CD8-positive, alpha-beta memory T cell (primary cell): ENCODE measurements at regions of chr12 and their contacts with region 1.

Region 1: DNA sequence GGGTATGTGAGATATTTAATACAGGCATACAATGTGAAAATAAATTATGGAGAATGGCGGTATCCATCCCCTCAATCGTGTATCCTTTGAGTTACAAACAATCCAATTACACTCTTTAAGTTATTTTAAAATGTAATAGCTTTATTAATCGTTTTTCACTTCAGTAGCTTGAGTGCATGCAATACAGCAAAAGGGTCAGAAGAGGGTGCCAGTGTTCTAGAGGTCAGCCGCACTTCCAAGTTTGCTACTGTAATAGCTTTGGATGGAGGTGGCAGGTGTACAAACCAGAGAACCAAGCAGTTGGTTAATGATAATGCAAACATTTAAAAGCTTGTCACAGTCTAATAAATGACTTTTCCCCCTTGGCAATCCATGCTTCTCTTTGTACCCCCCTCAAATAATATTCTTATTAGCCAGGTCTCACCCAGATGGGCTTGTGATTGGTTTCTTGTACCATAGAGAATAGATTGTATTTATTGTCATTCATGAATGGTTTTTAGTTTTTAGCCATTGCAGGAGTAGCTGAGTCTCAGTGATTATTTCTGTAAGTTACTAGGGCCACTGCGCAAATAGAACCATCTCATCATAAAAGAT is 127.0 kb downstream of the ERC1 start:
- DNase-seq: peak; percentile 52 to 80 (median 57)
- H3K4me3 ChIP-seq: no peak overlapping the region
- H3K4me3 Mint-ChIP-seq: no peak overlapping the region
- H3K27ac ChIP-seq: no peak overlapping the region
- H3K27ac Mint-ChIP-seq: no peak overlapping the region
- H3K4me1 ChIP-seq: peaks cover 2% of the 10 kb centered on the region
- H3K4me1 Mint-ChIP-seq: peaks cover 7 to 13% (median 7%) of the 10 kb centered on the region in 3 donors
- H3K27me3 ChIP-seq: no peaks in the 10 kb centered on the region
- H3K27me3 Mint-ChIP-seq: no peaks in the 10 kb centered on the region

Region 2: GRCh38 chr12:1130164-1130563 is 12.1 kb after region 1 on chr12:
- CTCF ChIA-PET with region 1: interaction called, 30 read pairs
- POLR2A ChIA-PET with region 1: no interaction called
- DNase-seq: no peak
- H3K4me3 ChIP-seq: no peak overlapping the region
- H3K4me3 Mint-ChIP-seq: no peak overlapping the region
- H3K27ac ChIP-seq: no peak overlapping the region
- H3K27ac Mint-ChIP-seq: peak overlapping the region in 2 of 8 donors; percentile 38 to 49
- H3K4me1 ChIP-seq: peaks cover 10% of the 10 kb centered on the region
- H3K4me1 Mint-ChIP-seq: peaks cover 35 to 45% (median 40%) of the 10 kb centered on the region in 3 donors
- H3K27me3 ChIP-seq: no peaks in the 10 kb centered on the region
- H3K27me3 Mint-ChIP-seq: no peaks in the 10 kb centered on the region

Region 3: GRCh38 chr12:1576410-1577241 is 458.6 kb after region 1 on chr12:
- CTCF ChIA-PET with region 1: interaction called, 138 read pairs
- POLR2A ChIA-PET with region 1: no interaction called
- DNase-seq: no peak
- H3K4me3 ChIP-seq: no peak overlapping the region
- H3K4me3 Mint-ChIP-seq: no peak overlapping the region
- H3K27ac ChIP-seq: no peak overlapping the region
- H3K27ac Mint-ChIP-seq: peak overlapping the region in 1 of 8 donors; percentile 24
- H3K4me1 ChIP-seq: no peaks in the 10 kb centered on the region
- H3K4me1 Mint-ChIP-seq: no peaks in the 10 kb centered on the region
- H3K27me3 ChIP-seq: no peaks in the 10 kb centered on the region
- H3K27me3 Mint-ChIP-seq: peaks cover 0 to 3% of the 10 kb centered on the region in 2 donors

Region 4: DNA sequence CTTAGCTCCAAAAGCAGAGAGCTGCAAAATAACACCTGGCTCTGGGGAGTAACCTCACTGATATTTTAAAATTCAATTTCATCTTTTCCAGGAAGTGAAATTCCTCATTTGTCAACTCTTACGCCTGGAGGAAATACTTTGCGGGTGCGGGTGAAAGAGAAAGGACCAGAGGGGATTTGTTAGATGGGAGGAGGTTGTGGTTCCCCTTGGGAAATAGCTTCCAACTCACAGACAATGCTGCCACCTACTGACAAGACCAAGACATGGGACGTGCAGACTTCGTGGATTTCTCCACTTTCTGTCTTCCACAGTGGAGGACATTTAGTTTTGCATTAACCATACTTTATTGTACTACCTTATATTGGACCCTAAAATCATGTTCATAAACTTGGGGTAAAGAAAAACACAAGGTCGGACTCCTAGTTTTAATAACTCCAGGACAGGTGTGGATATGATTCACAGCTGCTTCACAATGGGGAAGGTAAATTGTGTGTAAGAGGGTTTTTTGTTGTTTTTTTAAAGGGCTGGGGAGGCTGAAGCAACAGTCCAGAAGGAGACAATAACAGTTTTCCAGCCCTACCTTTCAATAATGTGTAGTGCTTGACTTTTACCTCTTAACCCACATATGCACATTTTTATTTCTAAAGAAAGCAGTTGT is 465.5 kb after region 1 on chr12:
- CTCF ChIA-PET with region 1: interaction called, 138 read pairs
- POLR2A ChIA-PET with region 1: interaction called, 10 read pairs
- DNase-seq: peak; percentile 33 to 78 (median 63)
- H3K4me3 ChIP-seq: no peak overlapping the region
- H3K4me3 Mint-ChIP-seq: peak overlapping the region in 4 of 7 donors; percentile 25 to 57 (median 34)
- H3K27ac ChIP-seq: no peak overlapping the region
- H3K27ac Mint-ChIP-seq: peak overlapping the region in 7 of 8 donors; percentile 8 to 80 (median 31)
- H3K4me1 ChIP-seq: peaks cover 19% of the 10 kb centered on the region
- H3K4me1 Mint-ChIP-seq: peaks cover 17 to 21% (median 18%) of the 10 kb centered on the region in 3 donors
- H3K27me3 ChIP-seq: no peaks in the 10 kb centered on the region
- H3K27me3 Mint-ChIP-seq: no peaks in the 10 kb centered on the region

Region 5: DNA sequence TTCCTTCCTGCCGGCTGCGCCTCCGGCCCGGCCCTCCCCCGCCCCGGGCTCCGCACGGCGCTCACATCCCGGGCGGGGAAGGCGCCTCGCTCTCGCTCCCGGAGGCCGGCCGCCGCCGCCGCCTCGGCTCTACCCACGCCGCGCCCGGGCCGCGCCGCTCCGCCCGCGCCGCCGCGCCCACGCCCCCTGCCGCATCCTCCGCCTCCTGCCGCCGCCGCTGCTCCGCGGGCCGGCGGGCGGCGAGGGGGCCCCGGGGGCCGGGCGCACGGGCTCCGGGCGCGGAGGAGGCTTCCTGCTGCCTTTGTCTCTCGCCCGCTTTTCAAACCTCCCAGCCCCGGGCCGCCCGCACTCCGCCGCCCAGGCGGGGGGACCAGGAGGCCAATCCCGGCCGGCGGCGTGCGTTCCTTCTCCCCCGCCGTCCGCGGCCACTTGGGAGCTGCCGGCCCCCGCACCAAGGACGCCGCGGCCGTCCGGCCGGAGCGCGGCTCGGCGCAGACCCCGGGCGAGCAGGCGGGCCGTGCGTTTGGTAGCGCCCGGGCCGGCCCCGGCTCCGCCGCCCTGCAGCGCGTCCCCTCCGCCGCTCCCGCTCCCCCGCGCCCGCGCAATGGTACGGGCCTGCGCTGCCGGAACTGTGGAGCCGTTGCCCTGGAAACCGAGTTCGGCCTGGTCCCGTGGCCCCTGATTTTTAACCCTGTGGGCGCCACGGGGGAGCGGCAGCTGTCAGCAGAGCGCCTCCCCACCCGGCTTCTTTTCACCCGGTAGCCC is 476.4 kb after region 1 on chr12 and contains the start of gene FBXL14:
- CTCF ChIA-PET with region 1: interaction called, 71 read pairs
- POLR2A ChIA-PET with region 1: interaction called, 5 read pairs
- DNase-seq: peak; percentile 86 to 95 (median 91)
- H3K4me3 ChIP-seq: peak within 1 kb of the TSS; percentile 95
- H3K4me3 Mint-ChIP-seq: peak within 1 kb of the TSS; percentile 92 to 98 (median 95)
- H3K27ac ChIP-seq: peak within 1 kb of the TSS; percentile 84
- H3K27ac Mint-ChIP-seq: peak within 1 kb of the TSS; percentile 90 to 98 (median 95)
- H3K4me1 ChIP-seq: peaks cover 32% of the 10 kb centered on the region
- H3K4me1 Mint-ChIP-seq: peaks cover 50 to 52% (median 51%) of the 10 kb centered on the region in 3 donors
- H3K27me3 ChIP-seq: no peaks in the 10 kb centered on the region
- H3K27me3 Mint-ChIP-seq: peaks cover 0 to 4% of the 10 kb centered on the region in 2 donors
- total RNA-seq, gene FBXL14: 20.5 to 22.1 TPM

Region 6: DNA sequence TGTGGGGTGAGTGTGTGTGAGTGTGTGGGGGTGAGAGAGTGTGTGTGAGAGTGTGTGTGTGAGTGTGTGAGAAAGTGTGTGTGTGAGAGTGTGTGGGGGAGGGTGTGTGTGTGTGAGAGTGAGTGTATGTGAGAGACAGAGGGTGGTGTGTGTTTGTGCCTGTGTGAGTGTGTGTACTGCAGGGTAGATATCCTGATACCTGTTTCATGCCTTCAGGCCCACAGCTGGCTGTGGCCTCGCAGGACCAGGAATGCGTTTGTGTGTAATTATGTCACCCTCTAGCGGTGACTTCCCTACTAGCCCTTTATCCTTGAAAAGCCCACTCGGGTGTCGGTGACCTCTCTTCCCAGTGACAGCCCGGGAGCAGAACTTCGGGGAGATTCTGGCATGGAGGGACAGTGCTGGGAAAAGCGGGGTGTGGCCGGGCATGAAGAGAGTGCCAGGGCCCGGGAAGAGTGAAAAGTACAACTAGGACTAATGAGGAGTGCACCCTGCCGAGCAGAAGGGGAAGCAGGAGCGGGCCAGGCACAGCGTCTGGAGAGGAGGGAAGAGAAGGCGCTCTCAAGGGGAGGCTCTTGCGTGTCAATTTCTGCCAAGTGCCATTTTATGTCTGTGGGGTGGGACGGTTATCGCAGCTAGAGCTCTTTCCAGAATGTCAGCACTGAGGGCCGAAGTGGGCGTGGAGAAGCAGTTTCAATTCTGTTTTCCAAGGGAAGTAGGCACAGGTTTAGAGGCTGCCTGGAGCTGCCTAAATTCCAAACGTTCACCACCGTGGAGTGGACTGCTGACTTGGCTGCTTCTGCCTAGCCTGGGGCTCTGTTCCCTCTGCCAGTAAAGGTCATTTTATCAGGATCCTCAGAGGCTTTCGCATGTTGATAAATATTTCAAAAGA is 487.3 kb after region 1 on chr12:
- CTCF ChIA-PET with region 1: interaction called, 71 read pairs
- POLR2A ChIA-PET with region 1: interaction called, 4 read pairs
- DNase-seq: peak; percentile 19 to 69 (median 53)
- H3K4me3 ChIP-seq: peak overlapping the region; percentile 54
- H3K4me3 Mint-ChIP-seq: peak overlapping the region; percentile 17 to 88 (median 79)
- H3K27ac ChIP-seq: peak overlapping the region; percentile 51
- H3K27ac Mint-ChIP-seq: peak overlapping the region in 7 of 8 donors; percentile 17 to 87 (median 52)
- H3K4me1 ChIP-seq: peaks cover 17% of the 10 kb centered on the region
- H3K4me1 Mint-ChIP-seq: peaks cover 27 to 41% (median 37%) of the 10 kb centered on the region in 3 donors
- H3K27me3 ChIP-seq: no peaks in the 10 kb centered on the region
- H3K27me3 Mint-ChIP-seq: peaks cover 2 to 3% of the 10 kb centered on the region in 2 donors